ENCODE measurements at regions of chr22 and their contacts with region 1.

Region 1: DNA sequence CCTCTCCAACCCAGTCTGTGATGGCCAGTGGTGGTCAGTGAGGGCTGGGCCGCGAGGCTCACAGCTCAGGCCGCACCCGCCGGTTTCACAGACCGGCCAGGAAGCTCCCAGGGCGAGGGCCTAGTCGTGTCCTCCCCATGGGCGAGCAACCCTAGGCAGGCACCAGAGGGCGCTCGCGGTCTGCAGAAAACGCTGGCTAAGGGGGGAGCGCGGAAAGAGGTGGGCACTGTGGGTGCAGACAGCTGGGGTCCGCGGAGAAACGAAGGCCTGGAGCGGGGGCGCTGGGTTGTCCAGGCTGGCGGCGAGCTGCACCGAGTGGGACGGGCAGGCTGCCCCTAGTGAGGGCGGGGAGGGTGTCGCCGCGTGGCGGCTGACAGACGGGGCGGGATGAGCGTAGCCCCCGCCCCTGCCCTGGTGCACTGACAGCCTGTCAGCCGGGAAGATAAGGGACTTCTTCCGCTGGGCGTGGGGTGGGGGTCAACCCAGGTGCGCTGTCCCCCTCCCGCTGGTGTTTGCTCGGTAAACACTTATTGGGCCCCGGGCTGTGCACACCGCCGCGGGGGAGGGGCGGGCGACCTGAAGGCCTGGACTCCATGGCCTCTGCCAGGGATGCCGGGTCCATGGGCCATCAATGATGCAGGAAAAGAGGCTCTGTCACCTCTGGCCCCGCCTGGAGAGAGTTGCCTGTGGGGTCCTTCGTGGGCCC is 7.5 kb downstream of the GP1BB start:
- DNase-seq: peak; percentile 91
- ATAC-seq: peak; percentile 94

Region 2: DNA sequence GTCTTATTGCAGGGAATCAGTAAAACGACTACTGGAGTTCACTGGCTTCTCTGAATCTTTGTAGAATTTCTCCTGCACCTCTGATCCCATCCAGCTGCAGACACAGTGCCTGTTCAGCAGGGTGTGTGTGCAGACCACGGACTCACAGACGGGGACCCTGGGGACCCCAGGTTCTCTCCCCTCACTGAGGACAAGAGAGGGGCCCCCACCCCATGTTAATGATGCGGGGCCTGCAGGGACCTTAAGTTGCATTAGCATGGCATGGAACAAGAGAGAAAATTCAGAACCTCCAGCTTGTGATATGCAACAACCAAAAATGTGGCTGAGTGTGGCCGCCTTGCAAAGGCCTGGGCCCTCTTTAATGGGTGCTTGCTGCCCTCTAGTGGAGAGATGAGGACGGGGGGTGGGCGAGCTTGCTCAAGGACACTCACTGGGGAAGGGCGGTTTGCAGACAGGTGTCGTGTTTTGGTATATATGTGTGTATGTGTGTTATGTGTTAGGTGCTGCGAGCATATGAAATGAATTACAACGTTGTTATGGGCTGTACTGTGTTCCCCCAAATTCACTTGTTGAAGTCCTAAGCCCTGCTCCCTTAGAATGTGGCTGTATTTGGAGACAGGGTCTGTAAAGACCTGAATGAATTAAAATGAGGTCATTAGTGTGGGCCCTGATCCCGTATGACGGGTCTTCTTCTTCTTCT is 100.9 kb before region 1 on chr22:
- intact Hi-C with region 1: no loop called
- DNase-seq: peak; percentile 82
- ATAC-seq: peak; percentile 92

Region 3: DNA sequence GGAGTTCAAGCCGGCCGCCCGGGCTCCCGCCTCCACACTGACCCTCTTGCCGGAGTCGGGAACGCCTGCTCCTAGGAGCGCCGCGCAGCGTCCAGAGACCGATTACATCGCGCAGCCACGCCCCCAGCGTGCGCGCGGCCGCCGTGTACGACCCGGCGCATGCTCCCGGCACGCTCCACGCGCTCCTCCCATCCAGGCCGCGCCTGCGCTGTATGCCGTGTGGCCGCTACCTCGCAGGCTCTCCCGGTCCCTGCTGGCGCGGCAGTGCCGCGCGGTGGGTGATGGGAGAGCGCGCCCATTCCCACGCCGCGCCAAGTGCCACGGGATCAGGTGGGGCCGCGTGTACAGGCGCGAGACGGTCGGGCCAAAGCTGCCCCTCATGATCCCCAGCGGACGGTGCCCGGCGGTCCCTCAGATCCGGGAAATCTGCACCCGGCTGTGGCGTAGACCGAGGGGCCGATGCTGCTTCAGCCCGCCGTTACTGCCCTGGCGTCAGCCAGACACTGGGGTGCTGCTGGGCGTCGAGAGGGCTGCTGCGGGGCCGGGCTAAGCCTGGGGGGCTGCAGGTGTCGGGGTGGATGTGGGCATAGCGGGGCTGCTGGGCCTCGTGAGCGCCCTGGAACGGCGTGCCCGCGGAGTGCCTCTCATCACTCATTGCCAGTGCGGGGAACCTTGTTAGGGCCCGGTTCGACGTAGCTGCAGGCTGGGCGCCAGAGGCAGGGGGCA is 124.1 kb after region 1 on chr22 and contains the starts of genes GNB1L and RTL10:
- intact Hi-C with region 1: loop called (anchors 5 kb)
- DNase-seq: peak; percentile 99
- ATAC-seq: peak; percentile 99
- total RNA-seq, gene GNB1L: 2.5 TPM
- total RNA-seq, gene RTL10: 6.2 TPM

Region 4: DNA sequence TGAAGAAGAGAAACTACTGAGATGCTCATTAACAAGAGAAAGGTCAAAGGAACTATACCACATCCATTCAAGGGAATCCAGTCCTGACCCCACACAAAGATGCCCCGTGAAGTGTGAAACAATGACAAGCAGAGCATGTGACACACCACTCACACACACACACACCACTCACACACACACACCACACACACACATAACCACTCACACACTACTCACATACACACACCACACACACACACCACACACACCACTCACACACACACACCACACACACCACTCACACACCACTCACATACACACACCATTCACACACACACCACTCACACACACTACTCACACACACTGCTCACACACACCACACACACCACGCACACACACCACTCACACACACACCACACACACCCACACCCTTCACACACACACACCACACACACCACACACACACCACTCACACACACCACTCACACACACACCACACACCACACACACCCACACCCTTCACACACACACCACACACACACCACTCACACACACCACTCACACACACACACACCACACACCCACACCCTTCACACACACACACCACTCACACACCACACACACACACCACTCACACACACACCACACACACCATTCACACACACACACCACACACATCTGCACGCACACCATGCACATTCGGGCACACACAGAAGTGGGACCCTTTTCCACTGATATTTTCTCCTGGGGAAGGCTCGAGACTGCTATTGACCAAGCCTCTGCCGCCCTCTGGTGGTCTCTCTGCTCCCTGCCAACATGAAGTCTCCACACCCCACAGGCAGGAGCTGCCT is 178.8 kb after region 1 on chr22:
- intact Hi-C with region 1: loop called (anchors 2 kb)
- DNase-seq: peak; percentile 91
- ATAC-seq: peak; percentile 95

Region 5: GRCh38 chr22:19970479-19971275 is 239.9 kb after region 1 on chr22:
- intact Hi-C with region 1: no loop called
- DNase-seq: peak; percentile 85
- ATAC-seq: peak; percentile 79

Measured in Right ventricle myocardium superior (tissue), 1 donor.